ENCODE measurements at regions of chr9 and their contacts with region 1.

Region 1: GRCh38 chr9:132406554-132407122 is at the start of gene TTF1:
- DNase-seq: peak; percentile 86 to 97 (median 94)
- ATAC-seq: peak; percentile 76
- H3K4me3 ChIP-seq: peak within 1 kb of the TSS; percentile 72
- H3K4me3 Mint-ChIP-seq: peak within 1 kb of the TSS; percentile 89
- H3K27ac ChIP-seq: peak within 1 kb of the TSS; percentile 48 to 60
- H3K27ac Mint-ChIP-seq: peak within 1 kb of the TSS; percentile 83
- H3K4me1 ChIP-seq: peaks cover 59% of the 10 kb centered on the region
- H3K4me1 Mint-ChIP-seq: peaks cover 63% of the 10 kb centered on the region
- H3K27me3 ChIP-seq: peaks cover 12 to 13% of the 10 kb centered on the region in 2 experiments
- H3K27me3 Mint-ChIP-seq: peaks cover 16% of the 10 kb centered on the region
- CTCF ChIP-seq: no peak
- total RNA-seq, gene TTF1: 12.4 to 12.8 TPM

Region 2: DNA sequence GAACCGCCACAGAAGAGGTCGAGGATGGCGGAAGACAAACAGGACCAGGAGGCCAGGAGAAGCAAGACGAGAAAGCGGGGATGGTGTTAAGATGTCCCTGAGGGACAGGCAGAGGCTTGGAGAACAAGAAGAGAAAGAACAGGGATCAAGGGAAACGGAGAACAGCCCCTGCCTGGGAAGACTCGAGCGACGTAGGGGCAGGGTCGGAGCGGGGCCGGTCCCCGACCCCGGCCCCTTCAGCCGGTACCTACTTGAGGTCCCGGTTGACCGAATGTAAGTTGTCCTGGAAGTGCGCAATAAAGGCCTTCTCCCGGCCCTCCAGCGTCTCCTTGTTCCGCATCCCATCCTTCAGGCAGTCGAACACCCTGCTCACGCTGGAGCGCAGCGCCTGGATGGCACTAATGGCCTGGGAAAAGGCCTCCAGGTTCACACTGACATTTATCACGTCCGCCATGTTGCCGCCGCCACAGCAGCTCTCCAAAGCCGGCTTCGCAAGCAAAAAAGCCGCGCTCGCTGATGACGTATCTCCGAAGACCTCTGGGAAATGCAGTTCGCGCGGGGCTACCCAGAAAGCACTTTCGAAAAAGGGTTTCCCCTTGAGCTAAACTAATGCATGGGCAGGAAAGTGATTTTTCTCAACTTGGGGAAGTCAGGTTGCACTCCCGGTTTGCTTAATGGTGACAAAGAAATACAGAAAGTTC is 327.1 kb before region 1 on chr9 and contains the start of gene MED27:
- CTCF ChIA-PET with region 1: no interaction called
- POLR2A ChIA-PET with region 1: no interaction called
- intact Hi-C with region 1: loop called in 1 of 2 experiments (anchors 5 kb)
- DNase-seq: peak; percentile 81 to 96 (median 92)
- ATAC-seq: peak; percentile 98
- H3K4me3 ChIP-seq: peak within 1 kb of the TSS; percentile 88
- H3K4me3 Mint-ChIP-seq: peak within 1 kb of the TSS; percentile 91
- H3K27ac ChIP-seq: peak within 1 kb of the TSS in 1 of 2 donors; percentile 11
- H3K27ac Mint-ChIP-seq: peak within 1 kb of the TSS; percentile 68
- H3K4me1 ChIP-seq: peaks cover 19% of the 10 kb centered on the region
- H3K4me1 Mint-ChIP-seq: peaks cover 47% of the 10 kb centered on the region
- H3K27me3 ChIP-seq: peaks cover 0 to 2% of the 10 kb centered on the region in 2 experiments
- H3K27me3 Mint-ChIP-seq: peaks cover 11% of the 10 kb centered on the region
- CTCF ChIP-seq: no peak
- total RNA-seq, gene MED27: 15.0 to 17.4 TPM

Region 3: DNA sequence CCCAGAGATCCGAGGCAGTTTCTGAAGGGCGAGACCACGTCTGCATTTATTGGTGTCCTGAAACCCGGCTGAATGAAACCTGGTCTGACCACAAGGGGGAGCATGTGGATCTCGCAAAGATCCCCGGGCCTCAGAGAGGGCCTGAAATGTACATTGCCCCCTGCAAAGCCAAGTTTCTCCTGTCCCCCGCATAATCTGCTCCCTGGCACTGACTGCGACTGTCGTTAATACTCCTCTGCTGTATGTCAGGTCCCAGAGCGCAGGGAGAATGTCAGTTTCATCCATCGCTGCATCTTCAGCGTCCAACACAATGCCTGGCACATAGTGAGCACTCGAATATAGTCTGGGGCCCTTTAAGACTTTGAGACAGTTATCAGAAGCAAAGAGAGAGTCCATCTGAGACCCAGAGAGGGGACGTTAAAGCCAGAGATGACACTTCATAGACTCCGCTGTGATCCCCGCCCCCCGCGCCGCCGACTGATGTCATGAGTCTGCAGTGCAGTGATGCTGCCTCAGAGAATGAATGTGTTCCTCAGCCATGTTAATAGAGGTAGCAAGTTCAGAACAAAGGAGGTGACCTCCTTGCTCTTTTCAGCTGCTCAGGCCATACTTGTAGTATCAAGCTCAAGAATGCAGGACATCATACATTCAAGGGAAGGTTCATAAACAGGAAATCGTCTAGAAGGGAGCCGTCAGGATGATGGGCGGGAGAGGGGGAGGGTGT is 101.3 kb after region 1 on chr9:
- CTCF ChIA-PET with region 1: no interaction called
- POLR2A ChIA-PET with region 1: no interaction called
- intact Hi-C with region 1: loop called (anchors 1 to 2 kb)
- DNase-seq: peak; percentile 49 to 80 (median 58)
- ATAC-seq: peak; percentile 63
- H3K4me3 ChIP-seq: no peak overlapping the region
- H3K4me3 Mint-ChIP-seq: no peak overlapping the region
- H3K27ac ChIP-seq: no peak overlapping the region
- H3K27ac Mint-ChIP-seq: no peak overlapping the region
- H3K4me1 ChIP-seq: peaks cover 22% of the 10 kb centered on the region
- H3K4me1 Mint-ChIP-seq: peaks cover 17% of the 10 kb centered on the region
- H3K27me3 ChIP-seq: peaks cover 0 to 4% of the 10 kb centered on the region in 2 experiments
- H3K27me3 Mint-ChIP-seq: peaks cover 4% of the 10 kb centered on the region
- CTCF ChIP-seq: peak; percentile 62

Region 4: GRCh38 chr9:132800038-132800648 is 393.5 kb after region 1 on chr9:
- CTCF ChIA-PET with region 1: no interaction called
- POLR2A ChIA-PET with region 1: no interaction called
- intact Hi-C with region 1: loop called (anchors 1 kb)
- DNase-seq: peak; percentile 35 to 84 (median 58)
- ATAC-seq: peak; percentile 98
- H3K4me3 ChIP-seq: no peak overlapping the region
- H3K4me3 Mint-ChIP-seq: no peak overlapping the region
- H3K27ac ChIP-seq: no peak overlapping the region
- H3K27ac Mint-ChIP-seq: no peak overlapping the region
- H3K4me1 ChIP-seq: peaks cover 15% of the 10 kb centered on the region
- H3K4me1 Mint-ChIP-seq: no peaks in the 10 kb centered on the region
- H3K27me3 ChIP-seq: peaks cover 9 to 13% of the 10 kb centered on the region in 2 experiments
- H3K27me3 Mint-ChIP-seq: peaks cover 67% of the 10 kb centered on the region
- CTCF ChIP-seq: peak; percentile 92

Region 5: GRCh38 chr9:132973713-132974112 is 567.1 kb after region 1 on chr9:
- CTCF ChIA-PET with region 1: no interaction called
- POLR2A ChIA-PET with region 1: no interaction called
- intact Hi-C with region 1: loop called in 1 of 2 experiments (anchors 10 kb)
- DNase-seq: peak in 2 of 14 experiments; percentile 18 to 33
- ATAC-seq: no peak
- H3K4me3 ChIP-seq: no peak overlapping the region
- H3K4me3 Mint-ChIP-seq: no peak overlapping the region
- H3K27ac ChIP-seq: no peak overlapping the region
- H3K27ac Mint-ChIP-seq: no peak overlapping the region
- H3K4me1 ChIP-seq: peaks cover 15% of the 10 kb centered on the region
- H3K4me1 Mint-ChIP-seq: peaks cover 5% of the 10 kb centered on the region
- H3K27me3 ChIP-seq: peaks cover 15 to 27% of the 10 kb centered on the region in 2 experiments
- H3K27me3 Mint-ChIP-seq: peaks cover 50% of the 10 kb centered on the region
- CTCF ChIP-seq: no peak